HepG2 (cell line): ENCODE measurements at regions of chr2 and their contacts with region 1.

Region 1: DNA sequence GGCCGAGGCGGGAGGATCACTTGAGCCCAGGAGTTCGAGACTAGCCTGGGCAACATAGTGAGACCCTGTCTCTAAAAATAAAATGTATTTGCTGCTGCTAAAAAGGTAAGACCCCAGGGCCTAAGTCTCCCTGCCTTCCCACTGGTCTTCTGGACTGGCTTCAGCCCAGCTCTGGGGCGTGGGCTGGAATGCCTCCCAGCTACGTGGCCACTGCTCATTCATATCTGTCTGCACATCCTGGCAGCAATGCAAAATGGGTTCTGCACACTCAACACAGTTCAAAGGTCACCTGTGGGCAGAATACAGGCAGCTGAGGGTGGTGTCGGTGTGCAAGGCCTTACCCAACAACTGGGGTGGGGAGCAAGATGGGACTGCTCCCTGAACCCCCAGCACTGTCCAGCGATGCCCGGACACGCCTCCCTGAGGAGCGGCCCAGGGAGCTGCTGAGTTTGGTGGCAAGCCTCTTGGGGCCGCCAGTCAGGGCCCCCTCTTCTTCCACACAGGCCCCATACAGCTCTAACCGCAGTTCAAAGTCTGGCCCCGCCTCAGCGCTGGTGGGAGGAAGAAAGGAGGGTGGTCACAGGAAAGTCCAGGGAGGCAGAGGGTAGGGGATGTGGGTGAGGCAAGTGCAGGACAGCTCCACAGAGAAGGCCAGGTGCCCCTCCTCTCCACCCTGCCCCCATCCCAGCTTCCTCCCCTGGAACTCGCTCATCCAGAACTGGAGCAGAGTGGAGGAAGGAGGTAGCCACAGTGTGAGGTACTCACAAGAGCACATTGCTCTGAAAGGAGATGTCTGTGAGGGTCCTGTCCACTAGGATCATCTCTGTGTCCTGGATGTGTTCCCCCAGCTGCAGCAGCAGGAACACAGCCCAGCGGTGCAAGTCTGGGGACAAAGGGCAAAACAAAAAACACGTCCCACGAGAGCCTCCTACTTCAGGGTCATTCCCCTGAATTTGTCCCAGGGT is 8.2 kb downstream of the WDR54 start:
- DNase-seq: peak; percentile 95
- ATAC-seq: peak; percentile 79
- H3K4me3 ChIP-seq: peak overlapping the region in 1 of 3 experiments; percentile 41; a peak in 2 of 6 replicates
- H3K27ac ChIP-seq: peak overlapping the region; percentile 80
- H3K4me1 ChIP-seq: peaks cover 79% of the 10 kb centered on the region
- H3K27me3 ChIP-seq: no peaks in the 10 kb centered on the region
- CTCF ChIP-seq: peak; percentile 41
- EP300 ChIP-seq: peak in 1 of 2 experiments; percentile 61; a peak in 2 of 4 replicates
- POLR2A ChIP-seq: peak; percentile 52 to 53; a peak in 3 of 4 replicates
- RAD21 ChIP-seq: peak; percentile 48; the same call in 1 of the 2 replicates

Region 2: GRCh38 chr2:74345272-74345943 is 84.4 kb before region 1 on chr2:
- CTCF ChIA-PET with region 1: no interaction called
- POLR2A ChIA-PET with region 1: no interaction called
- in situ Hi-C with region 1: no loop called
- intact Hi-C with region 1: no loop called
- DNase-seq: no peak
- ATAC-seq: no peak
- H3K4me3 ChIP-seq: no peak overlapping the region
- H3K27ac ChIP-seq: no peak overlapping the region
- H3K4me1 ChIP-seq: no peaks in the 10 kb centered on the region
- H3K27me3 ChIP-seq: no peaks in the 10 kb centered on the region; a peak in 1 of 5 replicates
- CTCF ChIP-seq: no peak
- EP300 ChIP-seq: no peak
- POLR2A ChIP-seq: no peak
- RAD21 ChIP-seq: no peak

Region 3: GRCh38 chr2:74391580-74392448 is 38.0 kb before region 1 on chr2:
- CTCF ChIA-PET with region 1: no interaction called
- POLR2A ChIA-PET with region 1: interaction called, 38 read pairs
- in situ Hi-C with region 1: no loop called
- intact Hi-C with region 1: no loop called
- DNase-seq: peak; percentile 91
- ATAC-seq: peak; percentile 91
- H3K4me3 ChIP-seq: peak overlapping the region; percentile 82 to 98 (median 84)
- H3K27ac ChIP-seq: peak overlapping the region; percentile 87
- H3K4me1 ChIP-seq: peaks cover 55% of the 10 kb centered on the region
- H3K27me3 ChIP-seq: peaks cover 0 to 4% of the 10 kb centered on the region in 2 experiments; a peak in 2 of 5 replicates
- CTCF ChIP-seq: peak; percentile 98
- EP300 ChIP-seq: no peak
- POLR2A ChIP-seq: peak; percentile 52 to 96
- RAD21 ChIP-seq: peak; percentile 74; the same call in 1 of the 2 replicates

Region 4: GRCh38 chr2:74447230-74447999 is 17.6 kb after region 1 on chr2:
- CTCF ChIA-PET with region 1: no interaction called
- POLR2A ChIA-PET with region 1: interaction called, 126 read pairs
- in situ Hi-C with region 1: no loop called
- intact Hi-C with region 1: loop called (anchors 1 kb)
- DNase-seq: peak; percentile 82
- ATAC-seq: peak; percentile 75
- H3K4me3 ChIP-seq: peak overlapping the region; percentile 18 to 31 (median 29); a peak in 4 of 6 replicates
- H3K27ac ChIP-seq: peak overlapping the region; percentile 65
- H3K4me1 ChIP-seq: peaks cover 66% of the 10 kb centered on the region
- H3K27me3 ChIP-seq: no peaks in the 10 kb centered on the region
- CTCF ChIP-seq: no peak
- EP300 ChIP-seq: no peak
- POLR2A ChIP-seq: peak in 1 of 2 experiments; percentile 44; a peak in 1 of 4 replicates
- RAD21 ChIP-seq: no peak

Region 5: GRCh38 chr2:74472086-74472944 is 42.5 kb after region 1 on chr2 and contains the start of gene MRPL53:
- CTCF ChIA-PET with region 1: no interaction called
- POLR2A ChIA-PET with region 1: interaction called, 22 read pairs
- in situ Hi-C with region 1: no loop called
- intact Hi-C with region 1: no loop called
- DNase-seq: peak; percentile 92
- ATAC-seq: peak; percentile 87
- H3K4me3 ChIP-seq: peak within 1 kb of the TSS; percentile 67 to 91 (median 83)
- H3K27ac ChIP-seq: peak within 1 kb of the TSS; percentile 83
- H3K4me1 ChIP-seq: peaks cover 52% of the 10 kb centered on the region
- H3K27me3 ChIP-seq: no peaks in the 10 kb centered on the region; a peak in 1 of 5 replicates
- CTCF ChIP-seq: peak; percentile 42; the same call in 1 of the 2 replicates
- EP300 ChIP-seq: peak in 1 of 2 experiments; percentile 54; a peak in 2 of 4 replicates
- POLR2A ChIP-seq: peak; percentile 94 to 97
- RAD21 ChIP-seq: peak; percentile 45; the same call in 1 of the 2 replicates
- total RNA-seq, gene MRPL53: 51.9 and 53.8 TPM in 2 replicates

Region 6: GRCh38 chr2:74507145-74507925 is 77.6 kb after region 1 on chr2 and contains the start of gene PCGF1:
- CTCF ChIA-PET with region 1: no interaction called
- POLR2A ChIA-PET with region 1: interaction called, 22 read pairs
- in situ Hi-C with region 1: no loop called
- intact Hi-C with region 1: no loop called
- DNase-seq: peak; percentile 98
- ATAC-seq: peak; percentile 78
- H3K4me3 ChIP-seq: peak within 1 kb of the TSS; percentile 79 to 97 (median 95)
- H3K27ac ChIP-seq: peak within 1 kb of the TSS; percentile 95
- H3K4me1 ChIP-seq: peaks cover 72% of the 10 kb centered on the region
- H3K27me3 ChIP-seq: no peaks in the 10 kb centered on the region; a peak in 1 of 5 replicates
- CTCF ChIP-seq: peak; percentile 98
- EP300 ChIP-seq: peak in 1 of 2 experiments; percentile 47; a peak in 1 of 4 replicates
- POLR2A ChIP-seq: peak in 1 of 2 experiments; percentile 73; a peak in 2 of 4 replicates
- RAD21 ChIP-seq: peak; percentile 89
- total RNA-seq, gene PCGF1: 14.2 and 20.4 TPM in 2 replicates